Heart right ventricle (tissue), 16 donors: ENCODE measurements at regions of chr9 and their contacts with region 1.

Region 1: GRCh38 chr9:38068866-38069629 is at the start of gene SHB:
- DNase-seq: peak; percentile 82 to 88
- ATAC-seq: peak; percentile 68 to 87 (median 76)
- H3K4me3 ChIP-seq: peak within 1 kb of the TSS; percentile 78 to 99 (median 95)
- H3K27ac ChIP-seq: peak within 1 kb of the TSS; percentile 87 to 99 (median 98)
- H3K4me1 ChIP-seq: peaks cover 3 to 57% (median 44%) of the 10 kb centered on the region in 9 donors
- H3K27me3 ChIP-seq: peaks cover 0 to 16% (median 0%) of the 10 kb centered on the region in 7 donors
- CTCF ChIP-seq: peak in 5 of 9 donors; percentile 2 to 47 (median 25)
- total RNA-seq, gene SHB: 13.9 to 26.6 (median 18.0) TPM

Region 2: DNA sequence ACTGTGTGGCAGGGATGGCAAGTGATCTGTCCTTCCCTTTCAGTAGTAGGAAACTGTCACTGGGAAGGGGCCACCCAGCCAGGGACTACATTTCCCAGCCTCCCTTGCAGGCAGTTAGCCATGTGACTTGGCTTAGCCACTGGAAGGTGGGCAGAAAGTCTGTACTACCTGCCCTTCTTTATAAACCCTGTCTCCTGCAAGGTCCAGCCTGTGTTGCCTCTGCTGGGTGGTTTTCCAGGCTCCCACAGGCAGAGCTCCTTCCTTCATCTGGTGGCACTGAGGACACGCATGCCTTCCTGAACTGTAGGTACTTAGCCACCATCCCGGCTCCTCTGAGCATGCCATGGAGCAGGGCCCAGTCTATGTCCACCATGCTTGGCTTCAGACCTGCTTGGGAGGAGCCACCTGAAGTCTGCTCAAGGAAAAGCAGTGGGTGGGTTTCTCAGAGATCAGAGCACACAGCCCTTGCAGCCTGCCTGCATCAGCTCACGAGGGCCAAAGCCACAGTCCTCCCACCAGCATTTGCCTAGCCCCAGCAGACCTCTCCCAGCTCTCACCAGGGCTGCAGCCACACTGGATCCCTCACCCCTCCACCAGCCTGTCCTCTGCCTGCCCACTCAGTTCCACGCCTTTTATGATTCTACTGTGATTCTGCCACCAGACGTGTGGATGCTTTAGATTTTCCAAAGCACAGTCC is 148.4 kb before region 1 on chr9:
- intact Hi-C with region 1: loop called in 8 of 10 experiments (anchors 1 to 10 kb)
- DNase-seq: no peak
- ATAC-seq: no peak
- H3K4me3 ChIP-seq: no peak overlapping the region
- H3K27ac ChIP-seq: no peak overlapping the region
- H3K4me1 ChIP-seq: peaks cover 11 to 55% (median 23%) of the 10 kb centered on the region in 9 donors
- H3K27me3 ChIP-seq: no peaks in the 10 kb centered on the region
- CTCF ChIP-seq: no peak

Region 3: DNA sequence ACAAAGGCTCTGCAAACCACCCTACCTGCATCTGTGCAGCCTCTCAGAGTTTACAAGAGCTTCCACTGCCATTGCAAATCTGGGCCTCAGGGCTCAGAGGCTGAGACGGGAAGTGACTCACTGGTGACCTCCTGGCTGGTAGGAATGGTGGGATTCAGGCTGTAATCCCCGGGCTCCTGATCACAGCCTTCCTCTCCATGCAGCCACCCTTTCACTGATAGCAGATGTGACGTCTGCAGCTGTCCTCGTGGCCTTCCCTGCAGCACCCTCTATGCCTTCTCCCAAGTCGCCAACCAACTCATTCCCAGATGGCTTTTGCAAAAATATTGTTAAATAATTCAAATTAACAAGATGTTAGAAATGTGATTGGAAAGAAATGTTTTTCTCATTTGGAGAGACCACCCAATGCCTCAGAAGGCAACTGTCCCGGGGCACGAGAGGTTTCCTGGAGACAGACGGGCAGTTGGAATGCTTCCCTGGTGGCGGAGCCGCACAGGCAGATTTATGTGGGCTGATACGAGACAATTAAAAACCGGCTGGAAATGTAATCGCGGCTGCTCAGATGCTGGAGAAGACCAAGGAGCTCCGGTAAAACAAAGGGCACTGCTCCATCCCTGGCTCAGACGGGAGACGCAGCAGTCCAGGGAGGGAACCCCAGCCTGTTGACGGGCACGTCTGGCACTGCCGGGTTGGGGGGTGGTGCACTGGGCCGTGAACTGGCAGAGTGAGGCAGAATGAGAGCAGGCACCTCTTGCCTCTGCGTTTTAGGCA is 130.7 kb before region 1 on chr9:
- intact Hi-C with region 1: loop called in 1 of 10 experiments (anchors 5 kb)
- DNase-seq: peak in 1 of 2 donors; percentile 45
- ATAC-seq: peak; percentile 48 to 75 (median 66)
- H3K4me3 ChIP-seq: peak overlapping the region in 2 of 10 donors; percentile 9 to 17
- H3K27ac ChIP-seq: peak overlapping the region in 9 of 10 donors; percentile 50 to 74 (median 60)
- H3K4me1 ChIP-seq: peaks cover 22 to 59% (median 47%) of the 10 kb centered on the region in 9 donors
- H3K27me3 ChIP-seq: no peaks in the 10 kb centered on the region
- CTCF ChIP-seq: no peak

Region 4: DNA sequence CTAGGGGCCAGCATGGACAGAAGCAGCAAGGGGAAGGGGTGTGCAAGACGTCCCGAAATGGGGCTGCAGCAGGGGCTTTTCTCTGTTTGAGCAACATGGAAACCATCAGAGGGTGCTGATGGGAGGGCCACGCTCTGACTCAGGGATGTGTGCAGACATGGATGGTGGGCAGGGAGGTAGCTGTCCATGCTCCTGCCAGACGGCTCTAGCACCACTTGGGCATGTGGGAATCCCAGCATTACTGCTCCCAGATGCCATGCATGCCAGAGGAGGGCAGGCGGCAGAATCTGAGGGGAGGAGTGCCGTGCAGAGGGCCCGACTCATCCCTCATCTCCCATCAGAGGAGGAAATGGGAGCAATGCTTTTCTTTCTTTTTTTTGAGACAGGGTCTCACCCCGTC is 119.5 kb before region 1 on chr9:
- intact Hi-C with region 1: no loop called
- DNase-seq: no peak
- ATAC-seq: peak in 1 of 8 donors; percentile 24
- H3K4me3 ChIP-seq: no peak overlapping the region
- H3K27ac ChIP-seq: no peak overlapping the region
- H3K4me1 ChIP-seq: peaks cover 10 to 69% (median 35%) of the 10 kb centered on the region in 9 donors
- H3K27me3 ChIP-seq: no peaks in the 10 kb centered on the region
- CTCF ChIP-seq: no peak

Region 5: DNA sequence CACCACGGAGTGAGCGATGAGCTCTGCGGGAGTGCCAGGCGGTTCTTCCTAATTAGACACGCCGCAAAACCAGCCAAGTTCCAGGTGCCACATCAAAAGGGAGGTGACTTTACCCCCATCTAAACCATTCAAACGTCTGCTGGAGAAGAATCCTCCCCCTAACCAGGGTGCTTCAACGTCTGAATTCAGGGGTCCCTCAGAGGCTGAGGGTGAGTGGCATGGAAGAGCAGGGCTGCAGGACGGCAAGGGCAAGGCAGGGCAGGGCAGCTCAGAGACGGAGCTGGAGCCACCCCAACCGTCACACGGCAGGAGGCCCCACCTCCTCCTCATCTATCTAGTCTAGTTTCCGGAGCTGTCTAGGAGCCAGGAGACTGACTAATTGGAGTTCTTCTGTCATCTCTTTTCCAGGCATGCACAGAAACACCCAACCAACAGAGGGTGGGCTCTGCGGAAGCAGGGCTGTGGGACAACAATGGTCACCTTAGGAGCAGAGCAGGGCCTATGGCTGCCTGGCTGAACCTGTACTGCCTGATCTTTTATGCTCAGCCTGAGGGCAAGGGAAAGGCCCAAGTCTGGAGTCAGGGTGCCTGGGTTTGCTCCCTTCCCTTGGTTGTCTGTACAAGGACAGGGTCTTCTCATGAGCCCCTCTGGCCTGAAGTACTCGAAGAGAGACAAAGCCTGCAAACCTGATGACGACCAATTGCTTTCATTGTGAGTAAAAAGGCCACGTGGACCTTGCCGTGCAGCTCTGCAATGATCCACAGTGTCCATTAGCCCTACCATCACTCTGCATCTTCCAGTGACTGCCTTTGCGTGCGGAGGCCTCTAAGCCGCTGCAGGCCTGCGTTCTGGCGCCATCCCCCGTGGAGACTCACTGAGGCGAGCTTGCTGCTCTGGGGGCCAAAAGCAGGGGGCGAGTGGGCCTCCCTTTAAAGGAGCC is 84.1 kb before region 1 on chr9:
- intact Hi-C with region 1: loop called in 3 of 10 experiments (anchors 5 kb)
- DNase-seq: peak; percentile 43 to 67
- ATAC-seq: peak; percentile 74 to 88 (median 82)
- H3K4me3 ChIP-seq: no peak overlapping the region
- H3K27ac ChIP-seq: peak overlapping the region in 5 of 10 donors; percentile 18 to 77 (median 59)
- H3K4me1 ChIP-seq: peaks cover 18 to 72% (median 54%) of the 10 kb centered on the region in 9 donors
- H3K27me3 ChIP-seq: no peaks in the 10 kb centered on the region
- CTCF ChIP-seq: peak in 4 of 9 donors; percentile 9 to 37 (median 26)

Region 6: GRCh38 chr9:38017149-38017884 is 51.7 kb before region 1 on chr9:
- intact Hi-C with region 1: loop called in 9 of 10 experiments (anchors 2 to 10 kb)
- DNase-seq: peak; percentile 68 to 73
- ATAC-seq: peak; percentile 63 to 87 (median 82)
- H3K4me3 ChIP-seq: no peak overlapping the region
- H3K27ac ChIP-seq: peak overlapping the region; percentile 12 to 88 (median 60)
- H3K4me1 ChIP-seq: peaks cover 33 to 79% (median 59%) of the 10 kb centered on the region in 9 donors
- H3K27me3 ChIP-seq: no peaks in the 10 kb centered on the region
- CTCF ChIP-seq: peak; percentile 27 to 61 (median 50)

Region 7: DNA sequence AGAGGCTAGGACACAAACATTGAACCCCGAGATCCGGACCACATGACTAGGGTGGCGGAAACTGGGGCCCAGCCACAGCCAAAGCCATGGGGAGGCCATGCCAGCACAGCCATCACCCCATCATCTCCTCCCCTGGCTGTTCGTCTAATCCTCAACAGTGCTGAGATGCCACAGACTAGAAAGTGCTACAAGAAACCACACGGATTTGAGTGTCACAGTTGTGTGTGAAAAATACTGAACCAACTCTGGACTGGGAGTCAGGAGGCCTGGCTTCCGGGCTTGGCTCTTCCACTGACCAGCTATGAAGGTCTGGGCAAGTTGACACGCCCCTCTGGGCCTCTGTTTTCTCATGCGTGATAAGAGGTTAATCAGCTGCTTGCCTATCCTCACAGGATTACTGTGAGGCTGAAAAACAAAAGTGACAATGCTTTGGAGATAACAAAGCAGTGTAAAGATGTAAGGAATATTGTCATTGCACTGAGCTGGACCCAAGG is 38.8 kb after region 1 on chr9:
- intact Hi-C with region 1: no loop called
- DNase-seq: no peak
- ATAC-seq: no peak
- H3K4me3 ChIP-seq: no peak overlapping the region
- H3K27ac ChIP-seq: no peak overlapping the region
- H3K4me1 ChIP-seq: peaks cover 0 to 6% (median 0%) of the 10 kb centered on the region in 9 donors
- H3K27me3 ChIP-seq: peaks cover 0 to 8% (median 0%) of the 10 kb centered on the region in 7 donors
- CTCF ChIP-seq: no peak